ENCODE measurements at regions of chr2 and their contacts with region 1.

Region 1: GRCh38 chr2:231706731-231707624 is 1.3 kb upstream of the PTMA start:
- DNase-seq: peak; percentile 98
- ATAC-seq: peak; percentile 48
- H3K4me3 ChIP-seq: peak overlapping the region; percentile 77 to 99 (median 89)
- H3K4me3 Mint-ChIP-seq: peak overlapping the region; percentile 99
- H3K27ac ChIP-seq: peak overlapping the region; percentile 98 to 99
- H3K27ac Mint-ChIP-seq: peak overlapping the region; percentile 100
- H3K4me1 ChIP-seq: peaks cover 20 to 38% of the 10 kb centered on the region in 2 donors
- H3K4me1 Mint-ChIP-seq: peaks cover 28% of the 10 kb centered on the region
- H3K27me3 ChIP-seq: no peaks in the 10 kb centered on the region
- H3K27me3 Mint-ChIP-seq: no peaks in the 10 kb centered on the region
- CTCF ChIP-seq: peak; percentile 96

Region 2: DNA sequence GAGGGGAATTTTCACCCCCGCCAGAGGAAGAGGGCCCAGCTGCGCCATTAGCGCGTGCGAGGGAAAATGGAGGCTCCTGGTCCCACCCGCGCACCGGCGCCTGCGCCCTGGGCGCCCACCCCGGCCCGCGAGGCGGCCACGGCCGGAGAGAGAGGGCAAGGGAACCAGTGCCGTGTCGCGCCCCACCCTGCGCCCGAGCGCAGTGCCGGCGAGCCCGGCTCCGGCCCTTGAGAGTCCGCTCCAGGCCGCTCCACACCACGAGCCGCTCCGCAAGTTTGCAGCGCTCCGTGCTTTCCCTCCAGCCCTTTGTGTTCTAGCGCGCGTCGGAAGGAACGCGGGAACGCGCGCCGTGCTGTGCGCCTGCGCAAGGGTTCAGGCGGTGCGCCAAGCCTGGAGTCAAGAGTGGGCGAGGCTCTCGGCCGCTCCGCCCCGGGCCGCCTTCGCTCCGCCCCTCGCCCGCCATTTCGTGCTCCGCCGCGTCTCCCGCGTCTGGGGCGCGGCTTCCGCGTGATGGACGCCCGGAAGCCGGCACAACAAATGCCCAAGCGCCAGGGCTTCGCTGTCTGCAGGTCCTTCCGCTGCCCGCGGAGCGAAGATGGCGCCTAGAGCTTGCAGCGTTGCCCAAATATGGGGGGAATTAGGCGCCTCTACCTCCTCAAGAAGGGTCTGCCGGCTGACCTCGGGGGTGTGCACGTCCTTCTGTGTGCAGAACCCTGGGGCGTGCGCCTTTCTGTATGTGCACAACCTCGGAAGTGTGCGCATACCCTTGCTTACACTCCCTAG is 44.8 kb before region 1 on chr2:
- CTCF ChIA-PET with region 1: interaction called, 19 read pairs
- POLR2A ChIA-PET with region 1: interaction called, 94 read pairs
- intact Hi-C with region 1: loop called (anchors 1 kb)
- DNase-seq: peak; percentile 100
- ATAC-seq: peak; percentile 76
- H3K4me3 ChIP-seq: peak overlapping the region; percentile 23 to 58 (median 49)
- H3K4me3 Mint-ChIP-seq: peak overlapping the region; percentile 79
- H3K27ac ChIP-seq: peak overlapping the region; percentile 90 to 98
- H3K27ac Mint-ChIP-seq: peak overlapping the region; percentile 96
- H3K4me1 ChIP-seq: peaks cover 44 to 56% of the 10 kb centered on the region in 2 donors
- H3K4me1 Mint-ChIP-seq: peaks cover 58% of the 10 kb centered on the region
- H3K27me3 ChIP-seq: no peaks in the 10 kb centered on the region
- H3K27me3 Mint-ChIP-seq: no peaks in the 10 kb centered on the region
- CTCF ChIP-seq: no peak

Region 3: DNA sequence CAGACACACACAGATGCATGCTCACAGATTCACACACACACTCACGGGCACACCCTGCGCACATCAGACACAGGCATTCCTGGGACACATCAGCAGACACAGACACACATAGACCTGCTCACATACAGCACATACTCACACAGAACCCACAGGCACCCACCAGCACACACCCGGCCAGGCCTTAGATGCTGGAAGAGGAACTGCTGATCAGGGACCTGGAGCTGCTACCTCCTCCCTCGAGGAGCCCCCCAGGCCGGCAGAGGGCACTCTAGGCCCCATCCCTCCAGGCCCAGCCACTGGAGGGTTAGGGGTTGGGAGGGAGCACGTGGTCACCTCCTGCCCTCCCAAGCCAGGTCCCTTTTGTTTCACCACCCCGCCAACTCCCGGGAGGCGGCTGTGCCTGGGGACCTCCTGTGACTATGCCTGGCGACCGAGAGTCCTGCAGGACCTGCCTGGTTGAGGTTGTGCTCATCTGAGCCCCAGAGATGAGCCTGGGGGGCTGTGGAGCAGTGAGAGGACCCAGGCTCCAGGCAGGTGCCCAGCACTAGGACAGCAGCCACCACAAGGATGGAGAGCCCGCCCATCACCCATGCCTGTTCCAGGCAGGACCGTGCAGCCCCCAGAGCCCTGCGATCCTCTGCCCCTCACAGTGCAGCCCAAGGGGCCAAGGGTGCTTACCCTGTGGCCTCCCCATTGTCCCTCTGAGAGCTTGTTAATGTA is 19.7 kb before region 1 on chr2:
- CTCF ChIA-PET with region 1: interaction called, 785 read pairs
- POLR2A ChIA-PET with region 1: interaction called, 75 read pairs
- intact Hi-C with region 1: loop called (anchors 1 kb)
- DNase-seq: peak; percentile 84
- ATAC-seq: peak; percentile 91
- H3K4me3 ChIP-seq: no peak overlapping the region
- H3K4me3 Mint-ChIP-seq: peak overlapping the region; percentile 14
- H3K27ac ChIP-seq: no peak overlapping the region
- H3K27ac Mint-ChIP-seq: peak overlapping the region; percentile 57
- H3K4me1 ChIP-seq: peaks cover 15 to 36% of the 10 kb centered on the region in 2 donors
- H3K4me1 Mint-ChIP-seq: peaks cover 38% of the 10 kb centered on the region
- H3K27me3 ChIP-seq: no peaks in the 10 kb centered on the region
- H3K27me3 Mint-ChIP-seq: no peaks in the 10 kb centered on the region
- CTCF ChIP-seq: peak; percentile 70

Region 4: DNA sequence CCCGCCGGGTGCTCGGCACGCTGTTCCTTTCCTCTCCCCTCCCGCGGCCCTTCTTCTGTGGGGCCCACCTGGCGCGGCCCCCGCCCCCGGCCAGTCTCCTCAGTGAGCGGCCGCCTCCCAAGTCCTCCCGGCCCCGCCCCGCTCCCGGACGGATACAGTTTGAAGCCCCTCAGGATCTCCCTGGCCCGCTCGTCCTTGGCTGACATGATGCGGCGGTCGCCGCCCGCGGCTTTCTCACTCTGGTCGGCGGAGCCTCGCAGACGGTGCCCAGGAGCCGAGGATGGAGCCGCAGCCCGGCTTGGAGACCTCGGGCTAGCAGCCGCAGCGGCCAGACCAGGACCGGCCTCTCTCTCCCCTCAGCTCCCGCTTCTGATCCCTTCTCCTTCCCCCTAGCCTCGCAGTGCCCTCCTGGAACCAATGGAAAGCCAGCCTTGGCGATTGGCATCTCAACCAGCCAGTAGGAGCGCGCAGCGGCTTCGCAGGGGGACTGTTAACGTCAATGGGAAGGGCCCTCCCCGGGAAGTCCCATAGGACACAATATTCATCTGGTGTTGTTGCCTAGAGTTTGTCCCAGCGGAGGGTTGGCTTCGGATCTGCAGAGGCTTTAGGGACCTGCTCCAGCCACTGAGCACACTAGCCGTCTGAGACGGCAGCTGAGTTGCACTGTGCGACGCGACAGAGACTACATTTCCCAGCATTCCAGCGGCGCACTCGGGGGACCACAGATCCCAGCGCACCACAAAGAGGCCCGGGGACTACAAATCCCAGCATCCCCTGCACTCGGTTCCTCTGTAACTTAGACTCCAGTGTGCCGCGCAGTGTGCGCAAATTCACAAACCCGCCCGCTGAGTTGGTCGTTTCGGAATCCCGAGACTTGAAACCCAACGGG is 74.2 kb after region 1 on chr2 and contains the start of gene PDE6D:
- CTCF ChIA-PET with region 1: interaction called, 4 read pairs
- POLR2A ChIA-PET with region 1: interaction called, 3 read pairs
- intact Hi-C with region 1: loop called (anchors 2 kb)
- DNase-seq: peak; percentile 98
- ATAC-seq: peak; percentile 89
- H3K4me3 ChIP-seq: peak within 1 kb of the TSS; percentile 72 to 92 (median 85)
- H3K4me3 Mint-ChIP-seq: peak within 1 kb of the TSS; percentile 100
- H3K27ac ChIP-seq: peak within 1 kb of the TSS; percentile 63 to 87
- H3K27ac Mint-ChIP-seq: peak within 1 kb of the TSS; percentile 97
- H3K4me1 ChIP-seq: peaks cover 28 to 32% of the 10 kb centered on the region in 2 donors
- H3K4me1 Mint-ChIP-seq: peaks cover 63% of the 10 kb centered on the region
- H3K27me3 ChIP-seq: no peaks in the 10 kb centered on the region
- H3K27me3 Mint-ChIP-seq: no peaks in the 10 kb centered on the region
- CTCF ChIP-seq: no peak
- total RNA-seq, gene PDE6D: 31.9 and 40.8 TPM in 2 replicates

Region 5: GRCh38 chr2:233075966-233076339 is 1369.0 kb after region 1 on chr2:
- CTCF ChIA-PET with region 1: no interaction called
- POLR2A ChIA-PET with region 1: interaction called, 10 read pairs
- intact Hi-C with region 1: no loop called
- DNase-seq: peak; percentile 86
- ATAC-seq: peak; percentile 83
- H3K4me3 ChIP-seq: peak overlapping the region; percentile 8 to 53 (median 35)
- H3K4me3 Mint-ChIP-seq: no peak overlapping the region
- H3K27ac ChIP-seq: peak overlapping the region; percentile 77 to 87
- H3K27ac Mint-ChIP-seq: no peak overlapping the region
- H3K4me1 ChIP-seq: peaks cover 91% of the 10 kb centered on the region in 2 donors
- H3K4me1 Mint-ChIP-seq: peaks cover 50% of the 10 kb centered on the region
- H3K27me3 ChIP-seq: no peaks in the 10 kb centered on the region
- H3K27me3 Mint-ChIP-seq: no peaks in the 10 kb centered on the region
- CTCF ChIP-seq: no peak

Measured in B cell (primary cell).